ENCODE measurements at regions of chr2 and their contacts with region 1.

Region 1: GRCh38 chr2:208175069-208175839 is 11.9 kb upstream of the CRYGA start:
- DNase-seq: peak; percentile 73
- H3K4me3 Mint-ChIP-seq: no peak overlapping the region
- H3K27ac Mint-ChIP-seq: no peak overlapping the region
- H3K4me1 Mint-ChIP-seq: no peaks in the 10 kb centered on the region
- H3K27me3 Mint-ChIP-seq: peaks cover 12% of the 10 kb centered on the region

Region 2: GRCh38 chr2:208164951-208165755 is 10.1 kb before region 1 on chr2:
- CTCF ChIA-PET with region 1: interaction called, 10 read pairs
- POLR2A ChIA-PET with region 1: no interaction called
- intact Hi-C with region 1: no loop called
- DNase-seq: no peak
- H3K4me3 Mint-ChIP-seq: no peak overlapping the region
- H3K27ac Mint-ChIP-seq: no peak overlapping the region
- H3K4me1 Mint-ChIP-seq: no peaks in the 10 kb centered on the region
- H3K27me3 Mint-ChIP-seq: peaks cover 11% of the 10 kb centered on the region

Region 3: GRCh38 chr2:208189810-208190503 is 14.7 kb after region 1 on chr2 and contains the start of gene C2orf80:
- CTCF ChIA-PET with region 1: interaction called, 13 read pairs
- POLR2A ChIA-PET with region 1: no interaction called
- intact Hi-C with region 1: no loop called
- DNase-seq: no peak
- H3K4me3 Mint-ChIP-seq: no peak within 1 kb of the TSS
- H3K27ac Mint-ChIP-seq: no peak within 1 kb of the TSS
- H3K4me1 Mint-ChIP-seq: no peaks in the 10 kb centered on the region
- H3K27me3 Mint-ChIP-seq: no peaks in the 10 kb centered on the region
- total RNA-seq, gene C2orf80: not detected

Measured in activated CD4-positive, alpha-beta memory T cell treated with anti-CD3 and anti-CD28 coated beads for 36 hours (primary cell).